ENCODE measurements at regions of chr9 and their contacts with region 1.

Region 1: GRCh38 chr9:116737152-116737546 is 50.0 kb downstream of the TRIM32 start:
- DNase-seq: peak; percentile 80 to 92 (median 91)
- ATAC-seq: peak; percentile 82 to 89
- H3K4me3 ChIP-seq: no peak overlapping the region
- H3K27ac ChIP-seq: no peak overlapping the region
- H3K4me1 ChIP-seq: peaks cover 3% of the 10 kb centered on the region
- H3K27me3 ChIP-seq: no peaks in the 10 kb centered on the region

Region 2: GRCh38 chr9:116860509-116861120 is 123.5 kb after region 1 on chr9:
- intact Hi-C with region 1: loop called (anchors 2 to 5 kb)
- DNase-seq: peak; percentile 68 to 89 (median 72)
- ATAC-seq: peak; percentile 80 to 85
- H3K4me3 ChIP-seq: no peak overlapping the region
- H3K27ac ChIP-seq: no peak overlapping the region
- H3K4me1 ChIP-seq: no peaks in the 10 kb centered on the region
- H3K27me3 ChIP-seq: no peaks in the 10 kb centered on the region